K562 (cell line): ENCODE measurements at regions of chr17 and their contacts with region 1.

Region 1: DNA sequence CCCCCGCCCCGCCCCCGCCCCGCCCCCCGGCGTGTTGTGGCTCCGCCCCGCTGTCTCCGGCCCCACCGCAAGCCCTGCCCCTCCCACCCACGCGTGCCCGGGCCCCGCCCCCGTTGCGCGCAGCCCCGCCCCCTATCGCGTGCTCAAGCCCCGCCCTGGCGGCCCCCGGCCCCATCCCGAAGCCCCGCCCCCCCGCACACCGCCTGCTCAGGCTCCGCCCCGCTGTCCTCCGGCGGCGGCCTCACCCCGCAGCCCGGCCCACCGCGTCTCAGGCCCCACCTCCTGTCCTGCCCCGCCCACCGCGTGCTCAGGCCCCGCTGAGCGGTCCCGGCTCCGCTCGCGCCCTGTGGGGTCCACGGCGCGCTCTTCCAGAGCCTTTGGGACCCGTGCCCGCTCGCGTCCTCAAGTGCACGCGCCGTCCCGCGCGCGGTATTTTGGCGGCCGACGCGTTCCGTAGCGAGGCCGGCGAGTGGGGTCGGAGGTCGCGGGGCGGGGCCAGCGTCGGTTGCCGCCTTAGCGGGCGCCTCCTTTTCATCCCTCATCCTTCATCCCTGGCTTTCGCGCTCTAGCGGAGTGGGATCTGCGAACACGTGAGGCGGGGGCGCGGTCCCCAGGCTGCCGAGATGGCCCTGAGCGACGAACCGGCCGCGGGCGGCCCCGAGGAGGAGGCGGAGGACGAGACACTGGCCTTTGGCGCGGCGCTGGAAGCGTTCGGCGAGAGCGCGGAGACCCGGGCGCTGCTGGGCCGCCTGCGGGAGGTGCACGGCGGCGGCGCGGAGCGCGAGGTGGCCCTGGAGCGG is at the start of gene TBCD:
- DNase-seq: peak; percentile 92 to 99 (median 98)
- ATAC-seq: peak; percentile 86
- H3K4me3 ChIP-seq: peak within 1 kb of the TSS; percentile 94
- H3K27ac ChIP-seq: peak within 1 kb of the TSS; percentile 95
- H3K4me1 ChIP-seq: peaks cover 24 to 38% of the 10 kb centered on the region in 2 experiments
- H3K27me3 ChIP-seq: no peaks in the 10 kb centered on the region
- CTCF ChIP-seq: no peak
- EP300 ChIP-seq: no peak
- POLR2A ChIP-seq: peak; percentile 58
- RAD21 ChIP-seq: no peak
- polyA plus RNA-seq, gene TBCD: 8.9 to 20.2 TPM

Region 2: DNA sequence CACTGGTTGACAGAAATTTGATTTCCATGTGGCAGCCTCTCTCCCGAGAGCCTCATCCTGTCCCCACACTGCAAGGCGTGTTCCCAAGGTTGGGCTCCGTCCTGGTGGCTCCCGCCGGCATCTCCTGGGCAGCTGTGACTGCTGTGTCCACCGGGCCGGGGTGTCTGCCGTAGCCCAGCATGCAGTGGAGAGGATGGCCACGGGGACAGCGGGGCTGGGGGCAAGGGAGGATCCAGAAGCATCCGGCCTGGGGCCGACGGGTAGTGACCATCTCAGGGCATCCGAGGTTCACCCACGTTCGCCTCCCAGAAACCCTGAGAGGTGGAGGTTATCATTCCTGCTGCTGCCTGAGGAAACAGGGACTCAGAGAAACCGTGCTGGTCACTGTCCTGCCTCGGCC is 46.0 kb before region 1 on chr17:
- CTCF ChIA-PET with region 1: no interaction called
- POLR2A ChIA-PET with region 1: no interaction called
- in situ Hi-C with region 1: no loop called
- intact Hi-C with region 1: no loop called
- DNase-seq: no peak
- ATAC-seq: no peak
- H3K4me3 ChIP-seq: no peak overlapping the region
- H3K27ac ChIP-seq: no peak overlapping the region
- H3K4me1 ChIP-seq: peaks cover 0 to 50% of the 10 kb centered on the region in 2 experiments; a peak in 2 of 5 replicates
- H3K27me3 ChIP-seq: peaks cover 0 to 11% of the 10 kb centered on the region in 2 experiments; a peak in 2 of 5 replicates
- CTCF ChIP-seq: no peak
- EP300 ChIP-seq: no peak
- POLR2A ChIP-seq: no peak
- RAD21 ChIP-seq: no peak

Region 3: GRCh38 chr17:82716203-82717010 is 35.4 kb before region 1 on chr17 and contains the start of gene FN3KRP:
- CTCF ChIA-PET with region 1: no interaction called
- POLR2A ChIA-PET with region 1: interaction called, 5 read pairs
- in situ Hi-C with region 1: no loop called
- intact Hi-C with region 1: loop called (anchors 5 kb)
- DNase-seq: peak; percentile 98 to 100 (median 98)
- ATAC-seq: peak; percentile 95
- H3K4me3 ChIP-seq: peak within 1 kb of the TSS; percentile 99
- H3K27ac ChIP-seq: peak within 1 kb of the TSS; percentile 73; the same call in 2 of the 3 replicates
- H3K4me1 ChIP-seq: peaks cover 5 to 41% of the 10 kb centered on the region in 2 experiments; a peak in 4 of 5 replicates
- H3K27me3 ChIP-seq: no peaks in the 10 kb centered on the region; a peak in 1 of 5 replicates
- CTCF ChIP-seq: no peak
- EP300 ChIP-seq: no peak
- POLR2A ChIP-seq: peak; percentile 82
- RAD21 ChIP-seq: no peak
- polyA plus RNA-seq, gene FN3KRP: 2.0 to 4.4 TPM